A549 (cell line): ENCODE measurements at regions of chr11 and their contacts with region 1.

Region 1: GRCh38 chr11:45252134-45252855 is 33.8 kb downstream of the SYT13 start:
- DNase-seq: peak; percentile 69 to 78
- ATAC-seq: peak; percentile 91 to 99
- H3K4me3 ChIP-seq: no peak overlapping the region
- H3K27ac ChIP-seq: 0 out of 6 replicates have a peak overlapping the region, but pooled peaks of 1 of the 2 experiments have one; percentile 29
- H3K4me1 ChIP-seq: 0 out of 3 replicates have a peak, but pooled peaks cover 6% of the 10 kb centered on the region
- CTCF ChIP-seq: peak; percentile 82
- EP300 ChIP-seq: no peak
- POLR2A ChIP-seq: no peak
- RAD21 ChIP-seq: peak; percentile 90 to 92

Region 2: GRCh38 chr11:45133871-45134270 is 118.4 kb before region 1 on chr11:
- CTCF ChIA-PET with region 1: no interaction called
- POLR2A ChIA-PET with region 1: no interaction called
- DNase-seq: no peak
- ATAC-seq: no peak
- H3K4me3 ChIP-seq: no peak overlapping the region
- H3K27ac ChIP-seq: no peak overlapping the region
- H3K4me1 ChIP-seq: peaks cover 7% of the 10 kb centered on the region; the same call in 1 of the 3 replicates
- CTCF ChIP-seq: no peak
- EP300 ChIP-seq: no peak
- POLR2A ChIP-seq: no peak
- RAD21 ChIP-seq: no peak

Region 3: GRCh38 chr11:45267052-45267451 is 14.8 kb after region 1 on chr11:
- CTCF ChIA-PET with region 1: interaction called, 46 read pairs
- POLR2A ChIA-PET with region 1: no interaction called
- DNase-seq: peak in 1 of 2 experiments; percentile 38
- ATAC-seq: peak in 1 of 2 experiments; percentile 29; a peak in 2 of 6 replicates
- H3K4me3 ChIP-seq: no peak overlapping the region
- H3K27ac ChIP-seq: peak overlapping the region; percentile 78 to 86
- H3K4me1 ChIP-seq: peaks cover 90% of the 10 kb centered on the region
- CTCF ChIP-seq: peak; percentile 50
- EP300 ChIP-seq: no peak
- POLR2A ChIP-seq: no peak
- RAD21 ChIP-seq: no peak

Region 4: GRCh38 chr11:45285930-45286632 is 33.8 kb after region 1 on chr11 and contains the start of gene SYT13:
- CTCF ChIA-PET with region 1: interaction called, 25 read pairs
- POLR2A ChIA-PET with region 1: no interaction called
- DNase-seq: peak; percentile 30 to 62
- ATAC-seq: peak; percentile 86 to 91
- H3K4me3 ChIP-seq: peak within 1 kb of the TSS; percentile 65
- H3K27ac ChIP-seq: peak within 1 kb of the TSS; percentile 73 to 87
- H3K4me1 ChIP-seq: peaks cover 12% of the 10 kb centered on the region
- CTCF ChIP-seq: no peak
- EP300 ChIP-seq: no peak
- POLR2A ChIP-seq: peak; percentile 24; the same call in 1 of the 2 replicates
- RAD21 ChIP-seq: no peak
- polyA plus RNA-seq, gene SYT13: 8.1 and 10.7 TPM in 2 replicates

Region 5: GRCh38 chr11:45294499-45294898 is 42.2 kb after region 1 on chr11:
- CTCF ChIA-PET with region 1: interaction called, 26 read pairs
- POLR2A ChIA-PET with region 1: no interaction called
- DNase-seq: no peak
- ATAC-seq: no peak
- H3K4me3 ChIP-seq: no peak overlapping the region
- H3K27ac ChIP-seq: no peak overlapping the region
- H3K4me1 ChIP-seq: peaks cover 6% of the 10 kb centered on the region
- CTCF ChIP-seq: no peak
- EP300 ChIP-seq: no peak
- POLR2A ChIP-seq: no peak
- RAD21 ChIP-seq: no peak

Region 6: GRCh38 chr11:45332276-45332934 is 80.1 kb after region 1 on chr11:
- CTCF ChIA-PET with region 1: interaction called, 20 read pairs
- POLR2A ChIA-PET with region 1: no interaction called
- DNase-seq: peak; percentile 29 to 64
- ATAC-seq: peak; percentile 69 to 88; a peak in 5 of 6 replicates
- H3K4me3 ChIP-seq: no peak overlapping the region
- H3K27ac ChIP-seq: no peak overlapping the region
- H3K4me1 ChIP-seq: no peaks in the 10 kb centered on the region; the same call in 2 of the 3 replicates
- CTCF ChIP-seq: peak; percentile 87
- EP300 ChIP-seq: no peak
- POLR2A ChIP-seq: no peak
- RAD21 ChIP-seq: peak; percentile 75 to 90

Region 7: GRCh38 chr11:45556851-45557707 is 304.8 kb after region 1 on chr11:
- CTCF ChIA-PET with region 1: no interaction called
- POLR2A ChIA-PET with region 1: no interaction called
- DNase-seq: peak in 1 of 2 experiments; percentile 29
- ATAC-seq: peak; percentile 20 to 52; a peak in 3 of 6 replicates
- H3K4me3 ChIP-seq: no peak overlapping the region
- H3K27ac ChIP-seq: peak overlapping the region; percentile 51 to 58; a peak in 4 of 6 replicates
- H3K4me1 ChIP-seq: peaks cover 13% of the 10 kb centered on the region
- CTCF ChIP-seq: no peak
- EP300 ChIP-seq: no peak
- POLR2A ChIP-seq: no peak
- RAD21 ChIP-seq: no peak

Region 8: DNA sequence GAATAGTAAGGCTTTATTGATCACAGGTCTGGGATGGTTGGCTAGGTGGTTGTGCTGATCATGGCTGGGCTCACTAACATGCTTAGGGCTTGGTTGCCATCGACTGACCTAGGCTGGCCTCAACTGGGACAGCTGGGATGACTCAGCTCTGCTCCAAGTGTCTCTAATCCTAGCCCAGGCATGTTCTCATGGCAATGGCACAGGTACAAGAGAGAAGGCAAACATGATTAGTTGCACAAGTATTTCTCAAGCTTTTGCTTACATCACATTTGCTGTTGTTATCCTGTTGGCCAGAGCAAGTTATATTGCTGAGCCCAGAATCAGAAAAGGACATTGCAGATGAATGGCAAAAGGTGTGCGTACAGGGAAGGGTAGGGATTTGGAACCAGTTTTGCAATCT is 484.1 kb after region 1 on chr11:
- CTCF ChIA-PET with region 1: no interaction called
- POLR2A ChIA-PET with region 1: no interaction called
- DNase-seq: peak in 1 of 2 experiments; percentile 56
- ATAC-seq: peak; percentile 52 to 85; a peak in 5 of 6 replicates
- H3K4me3 ChIP-seq: no peak overlapping the region
- H3K27ac ChIP-seq: peak overlapping the region; percentile 42 to 53; a peak in 5 of 6 replicates
- H3K4me1 ChIP-seq: peaks cover 8% of the 10 kb centered on the region; the same call in 2 of the 3 replicates
- CTCF ChIP-seq: no peak
- EP300 ChIP-seq: no peak; a peak in 1 of 5 replicates
- POLR2A ChIP-seq: no peak
- RAD21 ChIP-seq: no peak